ENCODE measurements at regions of chr1 and their contacts with region 1.

Region 1: GRCh38 chr1:206469933-206470691 is at the start of gene IKBKE:
- DNase-seq: peak in 28 of 35 experiments; percentile 2 to 70 (median 30)
- ATAC-seq: peak; percentile 57 to 69 (median 64)
- H3K4me3 ChIP-seq: peak within 1 kb of the TSS; percentile 96 to 98
- H3K4me3 Mint-ChIP-seq: peak within 1 kb of the TSS; percentile 83 to 93 (median 90)
- H3K27ac ChIP-seq: peak within 1 kb of the TSS; percentile 68
- H3K27ac Mint-ChIP-seq: peak within 1 kb of the TSS; percentile 96
- H3K4me1 ChIP-seq: peaks cover 42 to 67% of the 10 kb centered on the region in 2 experiments
- H3K4me1 Mint-ChIP-seq: peaks cover 76 to 89% (median 78%) of the 10 kb centered on the region in 3 donors
- H3K27me3 ChIP-seq: no peaks in the 10 kb centered on the region
- H3K27me3 Mint-ChIP-seq: no peaks in the 10 kb centered on the region
- total RNA-seq, gene IKBKE: 60.7 to 84.7 (median 81.4) TPM

Region 2: DNA sequence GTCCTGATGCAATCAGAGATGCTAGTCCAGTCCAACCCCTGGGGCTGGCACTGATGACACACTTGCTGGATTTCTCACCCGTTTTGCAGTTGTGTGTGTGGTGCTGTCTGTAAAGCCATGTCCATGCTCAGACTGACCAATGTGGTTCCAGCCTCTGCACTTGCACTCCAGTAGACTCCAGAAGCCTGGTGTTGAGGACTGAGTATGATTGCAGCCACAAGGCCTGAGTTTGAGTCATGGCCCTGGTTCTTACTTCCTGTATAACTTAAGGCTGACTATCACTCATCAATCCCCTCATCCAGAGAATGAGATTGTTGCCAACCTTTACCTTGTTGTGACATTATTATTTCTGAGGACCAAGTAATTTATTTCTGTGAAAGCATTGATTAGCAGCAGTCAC is 34.7 kb before region 1 on chr1:
- CTCF ChIA-PET with region 1: no interaction called
- POLR2A ChIA-PET with region 1: no interaction called
- DNase-seq: no peak
- ATAC-seq: no peak
- H3K4me3 ChIP-seq: no peak overlapping the region
- H3K4me3 Mint-ChIP-seq: no peak overlapping the region
- H3K27ac ChIP-seq: no peak overlapping the region
- H3K27ac Mint-ChIP-seq: no peak overlapping the region
- H3K4me1 ChIP-seq: no peaks in the 10 kb centered on the region
- H3K4me1 Mint-ChIP-seq: no peaks in the 10 kb centered on the region
- H3K27me3 ChIP-seq: no peaks in the 10 kb centered on the region
- H3K27me3 Mint-ChIP-seq: no peaks in the 10 kb centered on the region

Region 3: GRCh38 chr1:206590025-206590758 is 120.1 kb after region 1 on chr1:
- CTCF ChIA-PET with region 1: interaction called, 5 to 10 read pairs
- POLR2A ChIA-PET with region 1: no interaction called
- DNase-seq: peak in 11 of 35 experiments; percentile 19 to 66 (median 34)
- ATAC-seq: peak; percentile 79 to 95 (median 90)
- H3K4me3 ChIP-seq: no peak overlapping the region
- H3K4me3 Mint-ChIP-seq: peak overlapping the region in 1 of 3 donors; percentile 41
- H3K27ac ChIP-seq: peak overlapping the region; percentile 65
- H3K27ac Mint-ChIP-seq: peak overlapping the region; percentile 83 to 94
- H3K4me1 ChIP-seq: peaks cover 0 to 32% of the 10 kb centered on the region in 2 experiments
- H3K4me1 Mint-ChIP-seq: peaks cover 39 to 70% (median 70%) of the 10 kb centered on the region in 3 donors
- H3K27me3 ChIP-seq: no peaks in the 10 kb centered on the region
- H3K27me3 Mint-ChIP-seq: no peaks in the 10 kb centered on the region